Prostate gland (tissue), 2 donors: ENCODE measurements at regions of chr11 and their contacts with region 1.

Region 1: DNA sequence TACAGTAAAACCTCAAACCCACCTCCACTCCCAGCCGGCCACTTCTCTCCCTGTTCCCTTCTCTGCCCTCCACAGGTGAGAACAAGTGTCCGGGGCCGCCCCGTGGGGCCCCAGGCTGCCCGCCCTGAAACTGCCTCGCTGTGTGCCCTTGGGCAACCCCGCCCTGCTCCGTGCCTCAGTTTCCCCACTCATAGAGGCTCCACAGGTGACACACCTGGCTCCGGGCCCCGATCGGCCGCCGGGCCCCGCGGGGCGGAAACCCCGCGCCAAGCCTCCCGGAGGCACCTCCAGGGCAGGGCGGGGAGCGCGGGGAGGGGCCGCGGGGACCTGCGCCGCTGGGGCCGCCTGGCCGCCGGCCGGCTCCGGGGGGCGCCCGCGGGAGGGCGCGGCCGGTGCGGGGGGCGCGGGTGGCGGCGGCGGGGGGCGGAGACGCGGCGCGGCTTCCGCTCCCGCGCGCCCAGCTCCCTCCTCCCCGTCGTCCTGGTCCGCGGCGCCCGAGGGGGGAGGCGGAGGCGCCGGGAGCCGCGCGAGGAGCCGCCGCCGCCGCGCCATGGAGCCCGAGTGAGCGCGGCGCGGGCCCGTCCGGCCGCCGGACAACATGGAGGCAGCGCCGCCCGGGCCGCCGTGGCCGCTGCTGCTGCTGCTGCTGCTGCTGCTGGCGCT is at the start of gene LRP5:
- DNase-seq: no peak
- H3K4me3 ChIP-seq: peak within 1 kb of the TSS; percentile 60 to 75
- H3K27ac ChIP-seq: peak within 1 kb of the TSS; percentile 66 to 79
- H3K4me1 ChIP-seq: peaks cover 4% of the 10 kb centered on the region
- H3K27me3 ChIP-seq: no peaks in the 10 kb centered on the region
- CTCF ChIP-seq: no peak
- POLR2A ChIP-seq: no peak
- total RNA-seq, gene LRP5: 48.3 to 57.1 TPM

Region 2: GRCh38 chr11:68271781-68272608 is 40.3 kb before region 1 on chr11 and contains the start of gene C11orf24:
- intact Hi-C with region 1: loop called (anchors 5 kb)
- DNase-seq: peak; percentile 95
- H3K4me3 ChIP-seq: peak within 1 kb of the TSS; percentile 69 to 79
- H3K27ac ChIP-seq: peak within 1 kb of the TSS; percentile 93
- H3K4me1 ChIP-seq: no peaks in the 10 kb centered on the region
- H3K27me3 ChIP-seq: no peaks in the 10 kb centered on the region
- CTCF ChIP-seq: peak in 2 of 4 experiments; percentile 2 to 15
- POLR2A ChIP-seq: peak; percentile 81
- total RNA-seq, gene C11orf24: 25.1 to 61.0 TPM

Region 3: GRCh38 chr11:68351447-68352275 is 39.4 kb after region 1 on chr11:
- intact Hi-C with region 1: loop called (anchors 2 kb)
- DNase-seq: no peak
- H3K4me3 ChIP-seq: no peak overlapping the region
- H3K27ac ChIP-seq: peak overlapping the region; percentile 0 to 74
- H3K4me1 ChIP-seq: peaks cover 9% of the 10 kb centered on the region
- H3K27me3 ChIP-seq: no peaks in the 10 kb centered on the region
- CTCF ChIP-seq: peak in 1 of 4 experiments; percentile 9
- POLR2A ChIP-seq: no peak

Region 4: GRCh38 chr11:68362801-68363379 is 50.6 kb after region 1 on chr11:
- intact Hi-C with region 1: no loop called
- DNase-seq: no peak
- H3K4me3 ChIP-seq: no peak overlapping the region
- H3K27ac ChIP-seq: no peak overlapping the region
- H3K4me1 ChIP-seq: no peaks in the 10 kb centered on the region
- H3K27me3 ChIP-seq: no peaks in the 10 kb centered on the region
- CTCF ChIP-seq: no peak
- POLR2A ChIP-seq: no peak